ENCODE measurements at regions of chr4 and their contacts with region 1.

Region 1: GRCh38 chr4:38980903-38981676 is 51.1 kb downstream of the TMEM156 start:
- DNase-seq: peak; percentile 30
- ATAC-seq: peak; percentile 81
- H3K4me3 Mint-ChIP-seq: peak overlapping the region; percentile 23
- H3K27ac Mint-ChIP-seq: peak overlapping the region; percentile 84
- H3K4me1 Mint-ChIP-seq: peaks cover 62% of the 10 kb centered on the region
- H3K27me3 Mint-ChIP-seq: no peaks in the 10 kb centered on the region

Region 2: DNA sequence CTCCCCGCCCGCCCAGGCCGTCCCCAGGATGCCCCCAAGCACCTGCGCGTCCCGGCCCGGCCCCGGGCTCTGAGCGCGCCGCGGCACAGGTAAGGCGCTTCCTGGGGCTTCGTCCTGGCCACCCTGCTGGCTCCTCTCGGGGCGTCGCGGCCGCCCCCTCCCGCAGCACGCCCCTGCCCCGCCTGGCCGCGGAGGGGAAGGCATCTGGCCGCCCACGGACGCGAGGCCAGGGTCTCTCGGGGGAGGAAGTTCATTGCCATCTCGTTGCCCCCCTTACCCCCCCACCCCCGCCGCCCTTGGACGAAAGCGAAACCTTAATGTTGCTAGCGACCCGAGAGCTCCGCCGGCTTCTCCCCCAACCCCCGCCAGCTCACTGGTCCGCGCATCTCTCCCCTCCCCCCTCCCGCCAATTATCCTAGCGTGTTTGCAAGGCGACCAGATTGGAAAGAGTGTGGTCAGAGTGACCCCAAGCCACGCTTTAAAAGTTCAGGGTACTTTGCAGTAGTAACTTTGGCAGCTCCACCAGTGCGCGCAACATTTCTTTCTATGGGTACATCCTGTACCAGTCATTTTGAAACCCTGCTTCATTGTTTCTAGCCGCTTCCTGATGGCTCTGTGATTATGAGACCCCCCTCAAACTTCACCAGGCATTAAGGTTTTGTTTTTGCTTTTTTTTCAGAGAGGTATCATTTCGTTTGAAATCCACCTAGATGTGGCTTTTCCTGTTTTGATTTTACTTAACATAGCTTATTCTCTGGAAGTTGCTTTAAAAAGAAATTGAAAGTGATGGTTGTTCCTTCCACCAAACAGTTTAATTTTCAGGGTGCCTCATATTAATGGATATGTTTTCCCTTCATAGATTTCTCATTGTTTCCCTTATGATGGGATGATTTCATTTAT is 1089.6 kb before region 1 on chr4:
- CTCF ChIA-PET with region 1: no interaction called
- POLR2A ChIA-PET with region 1: no interaction called
- intact Hi-C with region 1: no loop called
- DNase-seq: peak; percentile 73
- ATAC-seq: peak; percentile 78
- H3K4me3 Mint-ChIP-seq: peak overlapping the region; percentile 78
- H3K27ac Mint-ChIP-seq: peak overlapping the region; percentile 93
- H3K4me1 Mint-ChIP-seq: peaks cover 35% of the 10 kb centered on the region
- H3K27me3 Mint-ChIP-seq: peaks cover 3% of the 10 kb centered on the region

Region 3: DNA sequence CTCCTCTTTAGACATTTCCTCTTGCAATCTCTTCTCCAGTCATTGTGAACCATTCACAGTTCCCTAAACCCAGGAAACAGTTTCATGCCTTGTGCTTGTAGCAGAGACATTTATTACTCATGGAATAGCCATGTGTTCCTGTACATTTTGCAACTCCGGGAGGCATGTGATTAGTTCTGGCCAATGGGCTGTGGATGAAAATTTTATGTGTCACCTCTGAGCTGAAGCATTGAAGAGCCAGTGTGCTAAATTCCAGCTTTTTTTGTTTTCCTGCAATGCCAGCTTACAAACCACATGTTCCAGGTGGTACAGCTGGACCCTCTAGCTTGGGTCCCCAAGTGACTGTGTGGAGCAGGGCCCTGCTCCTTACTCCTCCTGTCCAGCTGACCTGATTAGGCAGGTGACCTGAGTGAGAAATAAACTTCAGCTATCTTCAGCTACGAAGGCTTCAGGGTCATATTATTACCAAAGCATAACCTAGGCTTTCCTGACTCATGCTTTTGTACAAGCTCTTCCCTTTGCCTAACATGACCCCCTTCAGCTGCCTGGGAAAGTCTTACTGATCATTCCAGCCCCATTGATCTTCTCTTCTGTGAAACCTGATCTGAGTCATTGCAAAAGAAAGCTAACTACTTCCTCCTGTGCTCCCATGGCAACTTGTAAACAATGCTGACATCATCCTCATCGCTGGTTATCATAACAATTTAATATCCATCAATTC is 820.4 kb before region 1 on chr4:
- CTCF ChIA-PET with region 1: no interaction called
- POLR2A ChIA-PET with region 1: no interaction called
- intact Hi-C with region 1: no loop called
- DNase-seq: peak; percentile 69
- ATAC-seq: peak; percentile 79
- H3K4me3 Mint-ChIP-seq: no peak overlapping the region
- H3K27ac Mint-ChIP-seq: peak overlapping the region; percentile 73
- H3K4me1 Mint-ChIP-seq: peaks cover 70% of the 10 kb centered on the region
- H3K27me3 Mint-ChIP-seq: no peaks in the 10 kb centered on the region

Region 4: GRCh38 chr4:38914854-38915253 is 66.2 kb before region 1 on chr4:
- CTCF ChIA-PET with region 1: no interaction called
- POLR2A ChIA-PET with region 1: no interaction called
- intact Hi-C with region 1: loop called in 1 of 2 experiments (anchors 2 kb)
- DNase-seq: peak; percentile 20
- ATAC-seq: peak; percentile 71
- H3K4me3 Mint-ChIP-seq: peak overlapping the region; percentile 29
- H3K27ac Mint-ChIP-seq: peak overlapping the region; percentile 42
- H3K4me1 Mint-ChIP-seq: peaks cover 10% of the 10 kb centered on the region
- H3K27me3 Mint-ChIP-seq: no peaks in the 10 kb centered on the region

Region 5: DNA sequence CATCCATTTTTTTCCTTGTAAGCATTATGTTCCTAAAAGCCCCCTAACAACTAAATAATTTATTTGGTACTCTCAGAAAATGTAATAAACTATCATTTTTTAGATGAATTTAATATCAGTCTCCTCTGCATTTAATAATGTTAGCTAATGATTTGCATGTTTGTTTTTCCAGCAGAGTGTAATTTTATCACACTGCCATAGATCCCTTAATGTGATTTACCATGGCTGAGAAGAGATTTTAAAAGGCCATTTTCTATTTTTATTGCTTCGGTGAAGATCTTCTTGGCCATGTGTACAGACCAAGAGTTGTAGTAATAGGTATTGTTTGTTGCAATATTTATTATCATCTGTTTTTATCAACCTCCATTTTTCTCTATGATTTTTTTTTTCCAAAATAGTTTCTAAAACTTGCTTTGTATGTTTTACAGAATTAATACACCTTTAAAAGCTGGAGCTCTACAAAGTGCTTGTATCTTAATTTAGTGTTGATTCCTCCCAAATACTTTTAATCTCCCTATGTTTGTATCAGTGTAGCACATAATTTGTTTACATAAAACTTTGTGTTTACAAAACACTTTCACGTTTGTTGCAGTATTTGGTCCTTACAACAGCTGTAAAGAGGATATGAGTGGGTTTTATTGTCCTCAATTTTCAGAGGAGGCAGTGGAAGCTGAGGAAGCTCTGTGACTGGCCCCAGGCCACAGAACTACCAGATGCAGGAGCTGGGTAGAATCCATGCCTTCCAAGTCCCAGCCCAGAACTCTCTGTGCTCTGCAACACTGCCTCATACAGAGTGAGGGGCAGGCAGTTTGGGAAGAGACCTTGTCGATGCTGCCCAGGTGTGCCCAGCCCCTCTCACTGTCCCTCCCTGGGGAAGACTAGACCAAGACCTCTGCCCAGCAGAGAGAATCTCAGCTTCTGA is 55.3 kb before region 1 on chr4:
- CTCF ChIA-PET with region 1: no interaction called
- POLR2A ChIA-PET with region 1: no interaction called
- intact Hi-C with region 1: no loop called
- DNase-seq: no peak
- ATAC-seq: no peak
- H3K4me3 Mint-ChIP-seq: no peak overlapping the region
- H3K27ac Mint-ChIP-seq: no peak overlapping the region
- H3K4me1 Mint-ChIP-seq: peaks cover 9% of the 10 kb centered on the region
- H3K27me3 Mint-ChIP-seq: no peaks in the 10 kb centered on the region

Region 6: GRCh38 chr4:38939165-38939564 is 41.9 kb before region 1 on chr4:
- CTCF ChIA-PET with region 1: no interaction called
- POLR2A ChIA-PET with region 1: interaction called, 7 read pairs
- intact Hi-C with region 1: loop called in 1 of 2 experiments (anchors 2 kb)
- DNase-seq: no peak
- ATAC-seq: peak; percentile 94
- H3K4me3 Mint-ChIP-seq: no peak overlapping the region
- H3K27ac Mint-ChIP-seq: peak overlapping the region; percentile 47
- H3K4me1 Mint-ChIP-seq: peaks cover 42% of the 10 kb centered on the region
- H3K27me3 Mint-ChIP-seq: no peaks in the 10 kb centered on the region

Region 7: GRCh38 chr4:38948551-38948950 is 32.5 kb before region 1 on chr4:
- CTCF ChIA-PET with region 1: interaction called, 10 read pairs
- POLR2A ChIA-PET with region 1: interaction called, 4 read pairs
- intact Hi-C with region 1: loop called in 1 of 2 experiments (anchors 5 kb)
- DNase-seq: no peak
- ATAC-seq: no peak
- H3K4me3 Mint-ChIP-seq: no peak overlapping the region
- H3K27ac Mint-ChIP-seq: peak overlapping the region; percentile 81
- H3K4me1 Mint-ChIP-seq: peaks cover 31% of the 10 kb centered on the region
- H3K27me3 Mint-ChIP-seq: no peaks in the 10 kb centered on the region

Region 8: GRCh38 chr4:38958453-38959190 is 22.5 kb before region 1 on chr4:
- CTCF ChIA-PET with region 1: interaction called, 4 read pairs
- POLR2A ChIA-PET with region 1: interaction called, 7 read pairs
- intact Hi-C with region 1: loop called (anchors 2 kb)
- DNase-seq: no peak
- ATAC-seq: peak; percentile 57
- H3K4me3 Mint-ChIP-seq: no peak overlapping the region
- H3K27ac Mint-ChIP-seq: peak overlapping the region; percentile 84
- H3K4me1 Mint-ChIP-seq: peaks cover 33% of the 10 kb centered on the region
- H3K27me3 Mint-ChIP-seq: no peaks in the 10 kb centered on the region

Region 9: GRCh38 chr4:39044364-39044955 is 63.4 kb after region 1 on chr4:
- CTCF ChIA-PET with region 1: interaction called, 4 read pairs
- POLR2A ChIA-PET with region 1: interaction called, 14 read pairs
- intact Hi-C with region 1: loop called in 1 of 2 experiments (anchors 2 kb)
- DNase-seq: peak; percentile 99
- ATAC-seq: peak; percentile 87
- H3K4me3 Mint-ChIP-seq: peak overlapping the region; percentile 76
- H3K27ac Mint-ChIP-seq: peak overlapping the region; percentile 69
- H3K4me1 Mint-ChIP-seq: peaks cover 48% of the 10 kb centered on the region
- H3K27me3 Mint-ChIP-seq: no peaks in the 10 kb centered on the region